Breast epithelium (tissue), 4 donors: ENCODE measurements at regions of chr7 and their contacts with region 1.

Region 1: GRCh38 chr7:94998266-94999068 is 91.1 kb downstream of the PPP1R9A start:
- DNase-seq: no peak
- H3K4me3 ChIP-seq: no peak overlapping the region
- H3K27ac ChIP-seq: no peak overlapping the region
- H3K4me1 ChIP-seq: no peaks in the 10 kb centered on the region
- H3K27me3 ChIP-seq: no peaks in the 10 kb centered on the region
- CTCF ChIP-seq: no peak
- POLR2A ChIP-seq: no peak

Region 2: GRCh38 chr7:95028683-95029082 is 30.2 kb after region 1 on chr7:
- intact Hi-C with region 1: loop called (anchors 2 kb)
- DNase-seq: no peak
- H3K4me3 ChIP-seq: no peak overlapping the region
- H3K27ac ChIP-seq: no peak overlapping the region
- H3K4me1 ChIP-seq: no peaks in the 10 kb centered on the region
- H3K27me3 ChIP-seq: no peaks in the 10 kb centered on the region
- CTCF ChIP-seq: no peak
- POLR2A ChIP-seq: no peak